ENCODE measurements at regions of chr6 and their contacts with region 1.

Region 1: DNA sequence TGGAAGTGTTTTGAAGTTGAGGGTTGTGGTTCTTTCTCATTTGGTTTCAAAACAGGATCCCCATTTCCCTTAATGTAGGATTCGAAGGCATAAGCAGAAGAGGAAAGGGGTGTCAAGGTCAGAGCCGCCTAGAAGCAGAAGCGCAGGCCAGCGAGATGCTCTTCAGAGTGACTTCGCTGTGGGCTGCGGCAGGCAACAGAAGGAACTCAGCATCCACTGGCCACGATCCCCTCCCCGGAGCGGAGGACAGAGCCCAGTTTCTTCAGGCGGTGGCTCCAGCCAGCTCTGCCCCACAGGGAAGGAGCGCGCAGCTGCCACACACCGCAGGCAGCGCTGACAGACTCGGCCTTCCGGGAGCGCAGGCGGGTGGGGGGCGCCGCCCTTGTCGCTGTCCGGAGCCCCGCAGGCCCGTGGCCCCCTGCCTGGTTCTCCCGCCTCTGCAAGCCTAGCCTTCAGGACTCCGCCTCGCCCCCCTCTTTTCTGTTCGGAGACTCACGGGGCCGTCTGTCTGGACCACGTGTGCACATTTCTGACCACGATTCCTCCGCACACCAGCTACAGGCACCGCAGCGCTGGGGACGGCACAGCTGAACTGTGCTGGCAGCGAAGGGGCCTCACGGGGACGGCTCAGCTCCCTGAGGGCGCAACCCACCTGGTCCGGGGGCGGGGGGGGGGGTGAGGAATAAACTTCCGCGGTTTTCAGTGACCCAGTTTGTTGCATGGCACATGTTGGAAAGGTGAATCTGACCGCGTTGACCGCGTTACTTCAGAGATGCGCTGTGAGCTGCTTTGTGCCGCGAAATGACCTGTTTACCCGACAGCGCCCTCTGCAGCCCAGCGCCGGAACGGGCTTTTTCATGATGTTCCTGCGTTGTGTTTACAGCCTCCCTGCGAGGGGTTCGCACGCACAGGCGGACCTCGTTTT is 26.1 kb downstream of the TTLL2 start:
- DNase-seq: peak; percentile 11
- ATAC-seq: peak; percentile 87
- H3K4me3 ChIP-seq: peak overlapping the region; percentile 52; the same call in 1 of the 2 replicates
- H3K27ac ChIP-seq: no peak overlapping the region
- H3K4me1 ChIP-seq: peaks cover 11% of the 10 kb centered on the region
- H3K27me3 ChIP-seq: peaks cover 2 to 13% of the 10 kb centered on the region in 2 experiments; a peak in 3 of 4 replicates
- CTCF ChIP-seq: peak; percentile 68 to 80 (median 78)
- EP300 ChIP-seq: no peak
- POLR2A ChIP-seq: no peak
- RAD21 ChIP-seq: no peak; the same call in 1 of the 2 replicates

Region 2: DNA sequence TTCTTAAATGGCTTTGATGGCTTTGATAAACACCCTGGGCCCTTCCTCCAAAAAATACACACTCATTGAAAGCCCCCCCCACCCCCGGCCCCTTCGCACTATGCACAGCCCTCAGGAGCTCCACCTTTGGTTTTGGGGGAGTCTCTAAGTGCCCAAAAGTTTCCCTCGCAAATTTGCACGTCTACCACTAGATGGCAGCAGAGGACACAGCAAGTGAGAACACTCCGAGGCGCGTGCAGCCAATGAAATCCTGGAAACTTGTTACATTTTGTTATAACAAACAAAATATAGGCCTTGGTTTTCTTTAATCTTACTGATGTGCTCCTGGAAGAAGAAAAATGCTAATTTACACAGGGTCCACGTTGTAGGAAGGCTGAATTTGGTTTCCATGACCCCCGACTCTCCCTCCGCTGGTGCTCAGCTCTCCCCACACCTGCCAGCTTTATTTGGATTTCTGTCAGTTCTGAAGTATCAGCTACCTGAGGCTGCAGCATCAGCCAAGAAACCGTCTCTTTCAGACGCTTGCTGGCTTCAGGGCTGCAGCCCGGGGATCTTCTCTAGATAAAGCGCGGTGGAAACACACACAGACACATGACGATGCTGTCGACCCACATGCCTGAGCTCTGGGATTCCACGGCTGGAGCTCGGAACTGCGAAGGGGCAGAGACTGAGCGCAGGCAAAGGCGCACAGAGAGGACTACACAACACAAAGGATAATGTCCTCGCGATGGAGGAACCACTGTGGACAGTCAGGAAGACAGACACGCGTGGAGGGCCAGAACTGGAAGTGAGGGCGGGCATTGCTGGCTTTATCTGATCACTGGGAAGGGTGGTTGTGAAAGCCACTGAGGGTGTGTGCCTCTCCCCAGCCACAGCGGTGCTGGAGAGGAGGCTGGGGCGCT is 575.6 kb before region 1 on chr6:
- CTCF ChIA-PET with region 1: interaction called, 10 read pairs
- POLR2A ChIA-PET with region 1: no interaction called
- RAD21 ChIA-PET with region 1: no interaction called
- SMC1A ChIA-PET with region 1: no interaction called
- in situ Hi-C with region 1: no loop called
- intact Hi-C with region 1: loop called (anchors 5 kb)
- DNase-seq: no peak
- ATAC-seq: peak; percentile 94
- H3K4me3 ChIP-seq: no peak overlapping the region
- H3K27ac ChIP-seq: no peak overlapping the region
- H3K4me1 ChIP-seq: no peaks in the 10 kb centered on the region
- H3K27me3 ChIP-seq: peaks cover 0 to 2% of the 10 kb centered on the region in 2 experiments; a peak in 1 of 4 replicates
- CTCF ChIP-seq: peak; percentile 84 to 91 (median 88)
- EP300 ChIP-seq: no peak
- POLR2A ChIP-seq: no peak
- RAD21 ChIP-seq: peak; percentile 96

Region 3: GRCh38 chr6:167212713-167213005 is 138.3 kb before region 1 on chr6:
- CTCF ChIA-PET with region 1: interaction called, 6 read pairs
- POLR2A ChIA-PET with region 1: no interaction called
- RAD21 ChIA-PET with region 1: no interaction called
- SMC1A ChIA-PET with region 1: no interaction called
- in situ Hi-C with region 1: loop called (anchors 25 kb)
- intact Hi-C with region 1: no loop called
- DNase-seq: no peak
- ATAC-seq: peak; percentile 83
- H3K4me3 ChIP-seq: no peak overlapping the region
- H3K27ac ChIP-seq: no peak overlapping the region
- H3K4me1 ChIP-seq: peaks cover 5% of the 10 kb centered on the region; the same call in 1 of the 2 replicates
- H3K27me3 ChIP-seq: peaks cover 0 to 1% of the 10 kb centered on the region in 2 experiments; a peak in 2 of 4 replicates
- CTCF ChIP-seq: no peak
- EP300 ChIP-seq: no peak
- POLR2A ChIP-seq: no peak
- RAD21 ChIP-seq: no peak

Region 4: GRCh38 chr6:167275001-167275400 is 76.0 kb before region 1 on chr6:
- CTCF ChIA-PET with region 1: no interaction called
- POLR2A ChIA-PET with region 1: no interaction called
- RAD21 ChIA-PET with region 1: no interaction called
- SMC1A ChIA-PET with region 1: no interaction called
- in situ Hi-C with region 1: no loop called
- intact Hi-C with region 1: no loop called
- DNase-seq: no peak
- ATAC-seq: no peak
- H3K4me3 ChIP-seq: no peak overlapping the region
- H3K27ac ChIP-seq: no peak overlapping the region
- H3K4me1 ChIP-seq: no peaks in the 10 kb centered on the region
- H3K27me3 ChIP-seq: peaks cover 0 to 5% of the 10 kb centered on the region in 2 experiments
- CTCF ChIP-seq: no peak
- EP300 ChIP-seq: no peak
- POLR2A ChIP-seq: no peak
- RAD21 ChIP-seq: no peak